ENCODE measurements at regions of chr12 and their contacts with region 1.

Region 1: DNA sequence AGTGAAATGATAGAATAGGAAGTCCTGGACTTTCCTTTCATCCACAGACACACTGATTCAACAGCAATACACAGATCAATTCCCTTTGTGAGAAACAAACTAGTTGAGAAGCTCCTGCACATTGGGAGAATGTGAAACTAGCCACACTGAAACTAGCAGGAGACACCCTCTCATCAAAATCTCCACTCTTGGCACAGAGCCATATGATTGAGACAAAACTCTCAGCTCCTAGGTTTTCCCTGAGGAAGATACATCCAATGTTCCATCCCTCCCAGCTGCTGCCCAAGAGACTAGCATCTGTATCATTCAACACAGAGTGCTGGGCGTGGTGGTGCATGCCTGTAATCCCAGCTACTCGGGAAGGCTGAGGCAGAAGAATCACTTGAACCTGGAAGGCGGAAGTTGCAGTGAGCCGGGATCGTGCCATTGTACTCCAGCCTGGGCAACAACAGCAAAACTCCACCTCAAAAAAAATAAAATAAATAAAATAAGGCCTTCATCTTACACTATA is 51.8 kb upstream of the MTERF2 start:
- DNase-seq: no peak
- H3K4me3 ChIP-seq: no peak overlapping the region
- CTCF ChIP-seq: no peak
- POLR2A ChIP-seq: no peak

Region 2: DNA sequence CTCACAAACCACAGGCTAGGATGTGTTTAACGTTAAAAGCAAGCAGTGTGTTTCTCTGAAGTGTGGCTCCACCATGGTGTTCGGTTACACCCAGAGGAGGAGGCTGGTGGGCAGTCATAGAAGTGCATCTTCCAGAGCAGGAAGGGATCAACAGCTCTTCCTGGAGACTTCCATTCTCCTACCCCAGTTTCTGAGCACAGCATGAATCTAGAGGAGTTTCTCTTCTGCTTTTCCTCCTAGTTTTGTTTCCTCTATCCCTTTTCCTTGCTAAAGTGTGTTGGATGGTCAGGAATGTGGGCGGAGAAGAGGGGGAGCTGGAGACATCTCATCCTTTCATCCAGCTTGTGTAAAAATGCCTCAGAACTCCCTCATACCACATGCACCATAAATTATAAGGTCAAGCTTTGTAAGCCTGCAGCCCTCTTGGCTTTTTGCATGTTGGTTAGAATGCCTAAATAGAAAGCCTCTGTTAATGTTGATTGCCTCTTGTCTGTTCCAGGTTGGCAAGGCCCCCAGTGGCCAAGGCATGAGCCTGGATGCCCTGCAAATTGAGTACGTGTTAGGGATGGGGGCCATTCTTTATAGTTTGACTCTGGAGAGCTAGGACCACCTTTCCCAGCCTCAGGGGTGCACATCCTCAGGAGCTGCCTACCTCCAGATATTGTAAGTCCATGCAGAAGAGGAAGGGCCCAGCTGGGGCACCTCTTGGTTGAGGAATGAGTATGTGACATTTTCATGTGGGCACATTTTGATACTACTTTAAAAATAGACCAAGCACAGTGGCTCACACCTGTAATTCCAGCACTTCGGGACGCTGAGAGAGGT is 786.9 kb before region 1 on chr12:
- intact Hi-C with region 1: no loop called
- DNase-seq: no peak
- H3K4me3 ChIP-seq: no peak overlapping the region
- CTCF ChIP-seq: no peak
- POLR2A ChIP-seq: no peak

Region 3: DNA sequence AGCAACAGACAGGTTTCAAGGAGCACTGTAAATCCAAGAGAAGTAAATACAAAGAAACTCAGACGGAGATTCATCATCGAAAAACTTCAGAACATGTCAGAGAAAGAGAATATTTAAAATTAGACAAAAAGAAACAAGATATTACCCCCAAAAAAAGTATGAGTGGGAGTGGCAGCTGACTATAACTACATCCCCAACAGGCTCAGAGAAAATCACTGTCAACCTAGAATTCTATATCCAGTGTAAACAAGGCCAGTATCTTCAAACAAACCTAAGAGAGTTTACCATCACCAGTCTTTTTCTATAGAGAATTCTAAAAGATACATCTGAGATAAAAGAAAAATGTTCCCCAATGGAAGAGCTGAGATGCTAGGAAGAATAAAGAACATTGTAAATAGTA is 15.0 kb after region 1 on chr12:
- intact Hi-C with region 1: loop called (anchors 2 kb)
- DNase-seq: no peak
- H3K4me3 ChIP-seq: no peak overlapping the region
- CTCF ChIP-seq: no peak
- POLR2A ChIP-seq: no peak